HepG2 (cell line): ENCODE measurements at regions of chr20 and their contacts with region 1.

Region 1: DNA sequence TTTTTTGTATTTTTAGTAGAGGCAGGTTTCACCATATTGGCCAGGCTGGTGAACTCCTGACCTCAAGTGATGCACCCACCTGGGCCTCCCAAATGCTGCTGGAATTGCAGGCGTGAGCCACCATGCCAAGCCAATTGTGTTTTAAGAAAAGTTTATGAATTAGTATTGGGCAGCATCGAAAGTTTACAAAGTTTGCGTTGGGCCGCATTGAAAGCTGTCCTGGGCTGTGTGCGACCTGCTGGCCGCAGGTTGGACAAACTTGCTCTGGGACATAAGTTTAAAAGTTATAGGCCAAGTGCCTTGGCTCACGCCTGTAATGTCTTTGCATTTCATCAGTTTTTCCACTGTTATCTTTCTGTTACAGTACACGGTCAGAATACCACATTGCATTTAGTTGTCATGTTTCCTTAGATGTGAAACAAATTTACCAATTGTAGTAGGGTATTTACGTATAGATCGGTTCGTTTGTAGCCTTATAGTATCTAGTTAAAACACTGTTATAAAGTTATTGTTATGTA is 39.5 kb downstream of the ASXL1 start:
- DNase-seq: no peak
- ATAC-seq: no peak
- H3K4me3 ChIP-seq: no peak overlapping the region
- H3K27ac ChIP-seq: no peak overlapping the region
- H3K4me1 ChIP-seq: no peaks in the 10 kb centered on the region
- H3K27me3 ChIP-seq: no peaks in the 10 kb centered on the region
- CTCF ChIP-seq: no peak
- EP300 ChIP-seq: no peak
- POLR2A ChIP-seq: no peak
- RAD21 ChIP-seq: no peak

Region 2: DNA sequence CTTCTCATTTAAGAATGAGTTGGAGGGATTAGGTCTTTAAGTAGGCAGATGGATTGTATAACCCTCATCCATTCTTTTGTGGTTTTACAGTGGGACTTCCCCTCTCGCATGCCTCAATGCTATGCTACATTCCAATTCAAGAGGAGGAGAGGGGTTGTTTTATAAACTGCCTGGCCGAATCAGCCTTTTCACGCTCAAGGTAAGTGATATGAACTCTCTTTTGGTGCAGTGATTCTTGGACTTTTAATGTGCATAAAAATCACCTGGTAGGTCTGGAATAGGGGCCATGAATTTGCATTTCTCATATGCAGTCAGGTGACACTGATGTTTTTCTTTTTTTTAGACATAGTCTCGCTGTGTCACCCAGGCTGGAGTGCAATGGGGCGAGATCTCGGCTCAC is 28.7 kb before region 1 on chr20:
- CTCF ChIA-PET with region 1: no interaction called
- POLR2A ChIA-PET with region 1: no interaction called
- in situ Hi-C with region 1: no loop called
- intact Hi-C with region 1: loop called (anchors 2 kb)
- DNase-seq: no peak
- ATAC-seq: no peak
- H3K4me3 ChIP-seq: peak overlapping the region in 1 of 3 experiments; percentile 9; a peak in 1 of 6 replicates
- H3K27ac ChIP-seq: peak overlapping the region; percentile 50
- H3K4me1 ChIP-seq: peaks cover 65% of the 10 kb centered on the region
- H3K27me3 ChIP-seq: no peaks in the 10 kb centered on the region
- CTCF ChIP-seq: no peak
- EP300 ChIP-seq: no peak
- POLR2A ChIP-seq: no peak
- RAD21 ChIP-seq: no peak

Region 3: DNA sequence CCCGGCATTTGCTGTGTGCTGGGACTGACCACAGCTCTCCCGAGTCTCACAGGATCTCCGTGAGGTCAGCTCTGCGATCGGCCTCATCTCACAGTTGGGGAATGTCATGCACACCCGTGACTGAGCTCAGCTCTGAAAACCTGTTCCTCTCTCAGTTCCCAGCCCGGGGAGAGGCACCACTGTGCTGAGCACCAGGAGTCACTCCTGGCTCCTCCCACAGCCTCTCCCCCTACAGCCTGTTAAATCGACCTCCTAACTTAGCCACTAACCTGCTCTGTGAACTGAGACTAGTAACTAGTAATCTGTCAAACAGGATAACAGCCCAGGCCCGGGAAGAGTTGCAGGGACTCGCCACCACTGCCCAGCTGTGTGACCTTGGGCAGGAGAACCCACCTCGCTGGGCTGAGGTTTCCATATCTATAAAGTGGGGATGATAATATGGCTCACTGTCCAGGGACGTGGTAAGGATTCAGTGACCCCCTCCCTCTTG is 207.6 kb after region 1 on chr20:
- CTCF ChIA-PET with region 1: no interaction called
- POLR2A ChIA-PET with region 1: no interaction called
- in situ Hi-C with region 1: no loop called
- intact Hi-C with region 1: no loop called
- DNase-seq: no peak
- ATAC-seq: peak; percentile 8; the same call in 2 of the 3 replicates
- H3K4me3 ChIP-seq: no peak overlapping the region; a peak in 1 of 6 replicates
- H3K27ac ChIP-seq: no peak overlapping the region
- H3K4me1 ChIP-seq: peaks cover 50% of the 10 kb centered on the region
- H3K27me3 ChIP-seq: peaks cover 39 to 91% of the 10 kb centered on the region in 2 experiments
- CTCF ChIP-seq: no peak
- EP300 ChIP-seq: no peak
- POLR2A ChIP-seq: no peak
- RAD21 ChIP-seq: no peak